ENCODE measurements at regions of chr1 and their contacts with region 1.

Region 1: DNA sequence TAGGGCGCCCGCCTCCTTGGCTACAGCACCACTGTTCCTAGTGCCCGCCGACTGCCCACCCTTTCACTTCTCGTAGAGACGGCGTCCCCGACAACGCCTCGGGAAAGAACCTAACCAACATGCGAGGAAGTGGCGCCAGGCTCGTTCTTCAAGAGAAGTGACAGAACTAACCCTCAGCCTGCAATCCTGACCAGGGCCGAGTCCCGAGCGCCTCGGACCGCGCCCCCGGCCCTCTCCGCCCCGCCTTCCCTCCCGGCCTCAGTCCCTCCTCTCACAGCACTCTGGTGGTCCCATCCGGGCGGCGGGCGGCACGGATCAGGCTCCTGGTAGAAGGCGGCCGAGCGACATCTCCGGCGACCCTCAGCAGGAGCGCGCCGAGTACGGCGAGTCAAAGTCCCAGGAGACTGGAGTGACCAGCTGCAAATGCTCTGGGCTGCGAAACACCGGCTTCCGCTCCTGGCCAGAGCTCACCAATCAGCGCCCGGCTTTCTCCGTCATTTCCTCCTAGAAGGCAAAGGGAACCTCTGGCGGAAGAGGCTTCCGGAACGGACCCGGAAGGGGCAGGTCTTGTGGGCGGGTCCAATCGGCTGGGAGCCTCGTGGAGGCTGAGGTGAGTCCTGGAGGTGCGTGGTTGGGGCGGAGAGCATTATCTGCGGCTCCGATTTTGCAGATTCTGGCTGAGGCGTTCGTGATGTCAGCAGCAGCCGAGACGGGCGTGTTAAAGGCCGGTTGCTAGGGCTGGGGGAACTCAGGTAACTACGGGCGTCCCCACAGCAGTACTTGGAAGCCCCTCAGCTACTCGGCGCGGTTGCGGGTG is at the starts of genes GDAP2 and WDR3:
- DNase-seq: peak; percentile 99
- H3K4me3 ChIP-seq: peak within 1 kb of the TSS; percentile 93
- H3K27ac ChIP-seq: peak within 1 kb of the TSS; percentile 51
- H3K4me1 ChIP-seq: peaks cover 24% of the 10 kb centered on the region
- CTCF ChIP-seq: no peak
- total RNA-seq, gene GDAP2: 13.9 and 14.9 TPM in 2 replicates
- total RNA-seq, gene WDR3: 23.1 and 39.9 TPM in 2 replicates

Region 2: DNA sequence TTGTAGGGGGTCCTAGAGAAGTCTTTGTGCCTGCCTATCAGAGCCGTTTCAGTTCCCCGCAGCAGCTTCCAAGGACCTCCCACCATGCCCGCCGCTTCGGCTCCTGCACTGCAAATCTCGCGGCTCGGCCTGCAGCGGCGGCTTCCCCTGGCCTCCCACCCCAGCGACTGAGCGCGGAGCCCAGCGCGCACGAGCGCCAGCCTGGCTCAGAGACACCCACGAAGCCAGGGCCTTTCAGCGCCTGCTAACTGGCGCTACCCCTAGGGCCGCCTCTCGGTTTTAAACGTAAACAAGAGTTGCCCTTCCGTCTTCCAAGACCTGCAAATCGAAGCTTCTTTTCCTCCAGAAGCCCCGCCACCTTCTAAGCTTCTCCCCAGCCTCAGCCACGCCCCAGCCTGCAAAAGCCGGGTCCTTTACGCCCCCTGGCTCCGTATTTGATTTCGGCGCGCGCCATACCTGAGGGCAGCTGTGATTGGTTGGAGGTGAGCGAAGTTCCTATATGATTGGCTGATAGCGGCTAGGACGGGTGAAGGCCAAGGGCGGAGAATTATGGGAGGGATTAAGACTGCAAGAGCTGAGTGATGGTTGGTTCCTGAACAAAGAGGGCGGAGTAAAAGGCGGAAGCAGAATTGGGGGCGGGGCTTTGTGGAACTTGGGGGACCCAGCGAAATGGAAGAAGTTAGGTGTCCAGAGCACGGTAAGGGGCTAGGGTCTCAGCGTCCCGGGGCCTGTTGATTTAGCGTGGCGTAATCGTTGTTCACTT is 869.5 kb before region 1 on chr1 and contains the start of gene TTF2:
- CTCF ChIA-PET with region 1: no interaction called
- POLR2A ChIA-PET with region 1: no interaction called
- intact Hi-C with region 1: loop called (anchors 10 kb)
- DNase-seq: peak; percentile 99
- H3K4me3 ChIP-seq: peak within 1 kb of the TSS; percentile 90
- H3K27ac ChIP-seq: peak within 1 kb of the TSS; percentile 97
- H3K4me1 ChIP-seq: peaks cover 44% of the 10 kb centered on the region
- CTCF ChIP-seq: 0 out of 2 replicates have a peak, but pooled peaks have one; percentile 21
- total RNA-seq, gene TTF2: 81.3 and 82.6 TPM in 2 replicates

Region 3: GRCh38 chr1:117632269-117633067 is 296.9 kb before region 1 on chr1:
- CTCF ChIA-PET with region 1: no interaction called
- POLR2A ChIA-PET with region 1: no interaction called
- intact Hi-C with region 1: loop called (anchors 10 kb)
- DNase-seq: peak; percentile 83
- H3K4me3 ChIP-seq: peak overlapping the region; percentile 56
- H3K27ac ChIP-seq: peak overlapping the region; percentile 85
- H3K4me1 ChIP-seq: peaks cover 99% of the 10 kb centered on the region
- CTCF ChIP-seq: no peak

Region 4: DNA sequence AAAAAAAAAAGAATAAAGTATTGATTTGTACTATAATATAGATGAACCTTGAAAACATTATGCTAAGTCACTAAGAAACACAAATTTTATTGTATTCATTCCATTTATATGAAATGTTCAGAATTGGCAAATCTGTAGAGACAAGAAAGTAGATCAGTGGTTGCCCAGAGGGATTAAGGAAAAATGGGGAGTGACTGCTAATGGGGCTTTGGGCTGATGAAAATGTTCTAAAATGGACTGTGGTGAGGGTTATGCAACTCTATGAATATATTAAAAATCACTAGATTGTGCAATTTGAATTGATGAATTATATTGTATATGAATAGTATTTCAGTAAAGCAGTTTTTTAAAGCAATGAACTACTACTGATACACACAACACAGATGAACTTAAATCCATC is 10.0 kb before region 1 on chr1:
- CTCF ChIA-PET with region 1: no interaction called
- POLR2A ChIA-PET with region 1: interaction called, 11 read pairs
- intact Hi-C with region 1: no loop called
- DNase-seq: no peak
- H3K4me3 ChIP-seq: no peak overlapping the region
- H3K27ac ChIP-seq: no peak overlapping the region
- H3K4me1 ChIP-seq: no peaks in the 10 kb centered on the region
- CTCF ChIP-seq: no peak

Region 5: GRCh38 chr1:119140177-119141019 is 1211.0 kb after region 1 on chr1 and contains the start of gene WARS2:
- CTCF ChIA-PET with region 1: no interaction called
- POLR2A ChIA-PET with region 1: no interaction called
- intact Hi-C with region 1: loop called (anchors 2 kb)
- DNase-seq: peak; percentile 99
- H3K4me3 ChIP-seq: peak within 1 kb of the TSS; percentile 75
- H3K27ac ChIP-seq: peak within 1 kb of the TSS; percentile 72
- H3K4me1 ChIP-seq: peaks cover 27% of the 10 kb centered on the region
- CTCF ChIP-seq: no peak; the same call in 1 of the 2 replicates
- total RNA-seq, gene WARS2: 8.9 and 11.0 TPM in 2 replicates

Measured in OCI-LY7 (cell line).